A673 (cell line): ENCODE measurements at regions of chr2 and their contacts with region 1.

Region 1: DNA sequence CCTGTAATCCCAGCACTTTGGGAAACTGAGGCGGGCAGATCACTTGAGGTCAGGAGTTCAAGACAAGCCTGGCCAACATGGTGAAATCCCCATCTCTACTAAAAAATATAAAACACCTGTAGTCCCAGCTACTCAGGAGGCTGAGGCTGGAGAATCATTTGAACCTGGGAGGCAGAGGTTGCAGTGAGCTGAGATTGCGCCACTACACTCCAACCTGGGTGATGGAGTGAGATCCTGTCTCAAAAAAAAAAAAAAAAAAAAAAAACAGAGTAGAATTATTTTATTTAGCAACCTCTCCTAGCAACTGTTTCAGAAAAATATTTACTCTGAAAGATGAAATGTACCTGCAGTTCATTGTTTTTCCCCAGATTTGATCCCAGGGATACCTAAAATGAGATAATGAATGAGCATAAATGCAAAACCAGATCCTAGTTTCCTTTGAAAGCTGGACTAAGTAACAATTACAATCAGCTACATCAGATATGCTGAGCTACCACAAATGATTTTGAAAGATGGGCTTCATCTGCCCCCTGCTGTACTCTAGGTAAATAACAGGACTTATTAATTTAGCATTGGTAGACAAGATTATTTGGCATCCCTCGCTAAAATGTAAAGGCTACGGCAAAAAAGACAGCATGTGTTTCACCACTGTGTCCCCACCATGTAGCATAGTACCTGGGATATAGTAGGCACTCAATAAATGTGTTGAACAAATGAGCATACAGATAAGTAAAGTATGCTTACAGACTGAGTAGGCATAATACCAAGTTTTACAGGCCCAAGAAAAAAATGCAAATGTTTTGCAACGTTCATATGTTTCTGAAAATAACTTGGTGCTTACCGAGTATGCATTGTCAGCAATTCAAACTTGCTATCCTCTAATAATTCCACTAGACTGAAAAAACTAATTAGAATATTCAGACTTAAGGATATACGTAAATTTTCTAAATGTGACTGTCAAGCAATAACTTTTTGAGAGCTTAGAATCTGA is 102.5 kb downstream of the ATL2 start:
- DNase-seq: peak; percentile 78
- H3K4me3 ChIP-seq: no peak overlapping the region
- H3K27ac ChIP-seq: no peak overlapping the region
- H3K4me1 ChIP-seq: no peaks in the 10 kb centered on the region
- H3K27me3 ChIP-seq: no peaks in the 10 kb centered on the region
- CTCF ChIP-seq: peak; percentile 70

Region 2: GRCh38 chr2:37389989-37390765 is 884.4 kb before region 1 on chr2:
- CTCF ChIA-PET with region 1: interaction called, 3 read pairs
- POLR2A ChIA-PET with region 1: no interaction called
- intact Hi-C with region 1: loop called (anchors 10 kb)
- DNase-seq: peak; percentile 81
- H3K4me3 ChIP-seq: no peak overlapping the region
- H3K27ac ChIP-seq: peak overlapping the region; percentile 39
- H3K4me1 ChIP-seq: peaks cover 6% of the 10 kb centered on the region
- H3K27me3 ChIP-seq: no peaks in the 10 kb centered on the region
- CTCF ChIP-seq: no peak

Region 3: DNA sequence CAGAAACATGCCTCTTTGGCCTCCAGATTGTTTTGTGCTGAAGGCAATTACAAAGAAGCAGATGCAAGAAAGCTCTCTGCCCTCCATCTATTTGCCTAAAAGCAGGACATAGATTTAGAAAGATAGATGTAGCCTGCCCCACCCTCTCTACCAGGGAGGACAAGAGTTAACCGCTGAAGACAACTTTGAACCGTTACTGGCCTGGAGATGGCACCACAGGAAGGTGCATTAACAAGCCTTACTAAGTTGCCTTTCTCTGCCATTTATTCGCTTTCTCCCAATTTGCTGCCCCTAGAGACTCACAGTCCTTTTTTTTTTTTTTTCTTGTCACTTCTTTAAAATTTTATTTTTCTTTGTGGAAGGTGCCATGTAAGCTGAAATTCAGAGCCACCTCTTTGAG is 378.3 kb before region 1 on chr2:
- CTCF ChIA-PET with region 1: no interaction called
- POLR2A ChIA-PET with region 1: no interaction called
- intact Hi-C with region 1: loop called (anchors 5 kb)
- DNase-seq: peak; percentile 27
- H3K4me3 ChIP-seq: no peak overlapping the region
- H3K27ac ChIP-seq: no peak overlapping the region
- H3K4me1 ChIP-seq: no peaks in the 10 kb centered on the region
- H3K27me3 ChIP-seq: no peaks in the 10 kb centered on the region
- CTCF ChIP-seq: peak; percentile 28; the same call in 1 of the 2 replicates

Region 4: GRCh38 chr2:37982147-37982582 is 292.4 kb before region 1 on chr2:
- CTCF ChIA-PET with region 1: interaction called, 7 read pairs
- POLR2A ChIA-PET with region 1: no interaction called
- intact Hi-C with region 1: loop called (anchors 2 kb)
- DNase-seq: peak; percentile 82
- H3K4me3 ChIP-seq: no peak overlapping the region
- H3K27ac ChIP-seq: no peak overlapping the region
- H3K4me1 ChIP-seq: peaks cover 4% of the 10 kb centered on the region
- H3K27me3 ChIP-seq: no peaks in the 10 kb centered on the region
- CTCF ChIP-seq: peak; percentile 93

Region 5: DNA sequence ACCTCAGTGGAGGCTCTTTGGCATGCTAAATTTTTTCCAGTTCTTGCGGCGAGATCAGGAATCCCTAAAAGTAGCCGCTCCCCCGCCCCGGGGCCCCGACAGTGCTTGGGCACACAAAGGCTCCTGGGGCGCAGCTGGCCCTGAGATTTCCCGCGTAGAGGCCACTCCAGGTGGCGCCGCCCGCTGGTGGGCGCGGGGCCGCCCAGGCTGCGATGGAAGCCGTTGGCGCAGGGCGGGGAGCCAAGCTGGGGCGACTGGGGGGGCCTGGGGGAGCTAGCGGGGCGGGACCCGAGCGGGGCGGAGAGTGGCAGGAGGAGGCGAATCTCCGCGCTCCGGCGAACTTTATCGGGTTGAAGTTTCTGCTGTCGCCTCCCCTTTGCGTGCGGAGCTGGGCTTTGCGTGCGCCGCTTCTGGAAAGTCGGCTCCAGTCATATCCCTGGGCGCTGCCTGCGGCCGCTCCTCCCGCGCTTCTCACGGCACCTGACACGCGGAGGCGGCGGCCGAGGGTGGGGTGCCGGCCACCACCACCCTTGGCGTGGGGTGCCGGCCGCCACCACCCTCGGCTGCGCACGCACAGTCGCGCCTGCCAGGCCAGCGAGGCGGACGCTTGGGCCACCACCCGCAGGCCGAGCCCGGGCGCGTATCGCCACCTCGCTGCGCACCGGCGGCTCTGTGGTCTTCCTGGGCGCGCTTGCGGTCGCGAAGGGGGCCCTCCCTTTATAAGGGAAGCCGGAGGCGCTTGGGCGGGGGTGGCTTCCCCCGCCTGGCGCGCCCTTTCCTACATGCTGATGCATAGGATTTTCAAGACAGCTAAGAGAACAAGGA is 197.8 kb before region 1 on chr2:
- CTCF ChIA-PET with region 1: interaction called, 15 read pairs
- POLR2A ChIA-PET with region 1: no interaction called
- intact Hi-C with region 1: loop called (anchors 1 kb)
- DNase-seq: peak; percentile 81
- H3K4me3 ChIP-seq: peak overlapping the region; percentile 55
- H3K27ac ChIP-seq: peak overlapping the region; percentile 68
- H3K4me1 ChIP-seq: peaks cover 6% of the 10 kb centered on the region
- H3K27me3 ChIP-seq: no peaks in the 10 kb centered on the region
- CTCF ChIP-seq: peak; percentile 63

Region 6: DNA sequence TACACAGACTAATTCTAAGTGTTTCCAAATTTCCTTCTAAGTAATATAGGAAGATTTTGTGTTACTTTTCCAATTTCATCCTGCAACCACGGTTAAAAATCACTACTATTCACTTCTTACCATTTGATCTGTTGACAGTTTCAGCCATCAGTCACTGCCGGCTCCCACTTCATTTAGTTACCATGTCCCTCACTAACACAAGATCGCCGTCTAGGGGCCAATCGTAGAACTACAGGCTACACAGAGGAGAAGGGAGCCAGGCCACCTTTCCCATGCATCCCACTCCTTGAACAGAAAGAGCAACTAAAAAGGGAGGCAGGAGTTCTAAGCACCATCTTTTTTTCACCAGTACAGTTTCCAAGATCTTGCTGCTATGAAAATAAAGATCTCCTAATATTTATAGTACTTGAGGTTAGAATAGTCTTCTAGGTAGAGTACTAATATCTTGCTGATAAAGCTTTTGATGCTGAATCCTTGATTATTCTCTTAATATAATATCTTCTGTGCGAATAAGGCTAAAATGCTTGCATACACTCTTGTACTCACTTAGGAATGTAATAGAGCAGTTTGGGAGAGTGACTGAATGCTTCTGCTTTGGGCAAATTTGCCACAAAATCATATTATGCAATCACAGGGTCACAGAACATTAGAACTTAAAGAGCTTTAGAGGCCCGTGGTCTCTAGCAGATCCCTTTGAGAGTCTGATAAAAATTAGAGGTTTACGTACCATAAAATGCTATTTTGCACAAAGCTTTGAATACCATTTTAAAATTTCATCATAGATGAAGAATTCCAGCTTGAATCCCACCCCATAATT is 159.2 kb before region 1 on chr2:
- CTCF ChIA-PET with region 1: interaction called, 6 read pairs
- POLR2A ChIA-PET with region 1: no interaction called
- intact Hi-C with region 1: loop called (anchors 5 kb)
- DNase-seq: peak; percentile 85
- H3K4me3 ChIP-seq: no peak overlapping the region
- H3K27ac ChIP-seq: no peak overlapping the region
- H3K4me1 ChIP-seq: peaks cover 19% of the 10 kb centered on the region
- H3K27me3 ChIP-seq: no peaks in the 10 kb centered on the region
- CTCF ChIP-seq: peak; percentile 97

Region 7: DNA sequence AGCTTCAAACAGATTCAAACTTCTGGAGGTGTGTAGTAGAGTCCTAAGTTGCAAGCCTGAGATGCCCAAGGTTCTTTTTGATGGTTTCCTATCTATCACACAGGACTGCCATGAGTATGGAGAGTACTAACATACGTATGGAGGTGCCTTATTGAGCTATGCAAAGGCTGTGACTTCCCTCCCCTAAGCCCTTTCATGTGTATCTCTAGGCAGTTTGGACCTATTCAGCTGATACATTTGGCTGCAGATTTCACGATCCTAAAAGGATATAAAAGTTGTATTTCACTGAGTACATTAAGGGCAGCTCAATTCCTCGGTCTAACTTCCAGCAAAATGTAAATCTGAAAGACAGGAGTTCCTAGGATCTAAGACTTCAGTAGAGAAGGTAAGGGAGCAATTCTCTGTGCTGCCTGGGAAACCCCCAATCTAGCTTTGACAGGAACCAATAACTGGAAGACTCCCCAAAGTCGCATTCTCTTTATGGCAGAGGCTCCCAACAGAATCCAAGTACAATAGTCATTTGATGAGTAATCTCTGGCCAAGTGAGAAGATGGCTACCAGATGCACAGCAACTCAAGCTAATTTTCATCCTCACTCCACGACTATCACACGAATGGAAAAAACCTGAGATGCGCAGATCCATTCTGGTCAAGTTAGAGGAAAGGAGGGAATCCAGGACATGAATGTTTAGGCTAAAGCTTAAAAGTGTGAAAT is 18.7 kb after region 1 on chr2:
- CTCF ChIA-PET with region 1: no interaction called
- POLR2A ChIA-PET with region 1: no interaction called
- intact Hi-C with region 1: no loop called
- DNase-seq: no peak
- H3K4me3 ChIP-seq: no peak overlapping the region
- H3K27ac ChIP-seq: no peak overlapping the region
- H3K4me1 ChIP-seq: no peaks in the 10 kb centered on the region
- H3K27me3 ChIP-seq: no peaks in the 10 kb centered on the region
- CTCF ChIP-seq: no peak